OCI-LY7 (cell line): ENCODE measurements at regions of chr5 and their contacts with region 1.

Region 1: DNA sequence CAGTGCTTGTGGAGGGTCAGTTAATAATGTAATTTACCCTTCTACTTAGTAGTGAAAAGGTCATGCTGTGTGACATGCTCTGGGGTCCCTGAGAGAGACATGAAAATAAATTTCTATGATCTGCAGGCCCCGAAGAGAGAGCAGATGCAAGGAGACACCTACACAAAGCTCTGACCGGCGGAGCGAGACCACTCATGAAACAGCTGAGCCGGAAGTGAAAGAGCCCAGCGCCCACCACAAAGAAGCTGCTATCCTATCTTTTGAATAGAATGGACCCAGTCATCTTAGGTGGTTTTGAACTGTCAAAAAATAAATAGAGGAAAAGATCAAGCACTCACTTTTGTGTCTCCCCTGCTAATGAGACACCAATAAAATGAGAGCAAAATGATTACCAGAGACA is 190.0 kb downstream of the MED10 start:
- DNase-seq: peak; percentile 97
- H3K4me3 ChIP-seq: peak overlapping the region; percentile 56
- H3K27ac ChIP-seq: peak overlapping the region; percentile 98
- H3K4me1 ChIP-seq: peaks cover 71% of the 10 kb centered on the region
- CTCF ChIP-seq: no peak

Region 2: GRCh38 chr5:5421961-5422818 is 766.2 kb before region 1 on chr5 and contains the start of gene ICE1:
- CTCF ChIA-PET with region 1: no interaction called
- POLR2A ChIA-PET with region 1: no interaction called
- intact Hi-C with region 1: loop called (anchors 5 kb)
- DNase-seq: peak; percentile 97
- H3K4me3 ChIP-seq: peak within 1 kb of the TSS; percentile 99
- H3K27ac ChIP-seq: peak within 1 kb of the TSS; percentile 71
- H3K4me1 ChIP-seq: peaks cover 45% of the 10 kb centered on the region
- CTCF ChIP-seq: no peak
- total RNA-seq, gene ICE1: 24.4 and 25.2 TPM in 2 replicates

Region 3: DNA sequence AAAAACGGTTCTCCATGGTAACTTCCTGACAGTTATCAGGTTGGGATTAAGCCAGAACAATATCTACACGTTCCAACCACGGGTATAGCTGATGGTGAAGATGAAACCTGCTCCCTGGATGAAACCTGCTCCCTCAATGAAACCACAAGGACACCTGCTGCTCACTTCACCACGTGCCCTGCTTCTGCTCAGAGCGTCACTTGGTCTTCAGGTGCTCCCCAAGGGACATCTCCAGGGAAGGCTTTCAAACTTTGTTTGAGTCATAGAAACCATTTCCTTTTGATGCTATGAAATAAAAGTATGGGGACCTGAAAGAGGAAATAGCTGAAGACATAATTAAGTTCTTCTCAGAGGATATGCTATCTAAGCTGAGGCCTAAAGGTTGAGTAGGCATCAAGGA is 52.4 kb before region 1 on chr5:
- CTCF ChIA-PET with region 1: interaction called, 4 read pairs
- POLR2A ChIA-PET with region 1: interaction called, 3 read pairs
- intact Hi-C with region 1: loop called (anchors 1 kb)
- DNase-seq: peak; percentile 84
- H3K4me3 ChIP-seq: peak overlapping the region; percentile 30
- H3K27ac ChIP-seq: no peak overlapping the region
- H3K4me1 ChIP-seq: peaks cover 16% of the 10 kb centered on the region
- CTCF ChIP-seq: no peak

Region 4: DNA sequence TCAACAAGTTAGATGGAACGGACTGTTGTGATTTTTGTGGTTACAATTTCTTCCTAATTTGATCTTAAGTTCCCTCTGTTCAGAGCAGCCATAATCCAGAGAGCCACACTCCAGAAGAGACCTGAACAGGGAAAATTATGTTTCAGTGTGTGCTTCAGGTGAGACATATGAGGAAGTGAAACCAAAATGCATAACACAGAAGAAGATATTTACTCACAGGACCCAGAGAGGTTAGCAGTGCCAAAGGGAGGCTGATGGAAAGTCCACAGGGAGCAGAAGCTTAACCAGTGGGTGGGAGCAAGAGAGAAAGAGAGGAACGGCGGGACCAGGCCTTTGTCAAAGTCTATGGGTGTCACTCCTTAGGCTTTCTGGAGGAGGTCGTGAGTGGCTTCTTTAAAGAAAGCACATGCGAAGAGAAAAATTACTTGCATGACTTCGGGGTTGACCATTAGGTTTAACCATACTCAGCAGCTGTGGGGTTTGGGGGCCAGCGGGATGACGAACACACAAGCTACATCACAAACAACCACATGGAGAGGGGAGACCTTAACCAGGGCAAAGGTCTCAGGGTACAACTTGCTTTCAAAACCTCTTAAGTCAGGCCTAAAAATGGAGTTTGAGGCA is 48.6 kb after region 1 on chr5:
- CTCF ChIA-PET with region 1: no interaction called
- POLR2A ChIA-PET with region 1: no interaction called
- intact Hi-C with region 1: loop called (anchors 2 kb)
- DNase-seq: peak; percentile 66
- H3K4me3 ChIP-seq: no peak overlapping the region
- H3K27ac ChIP-seq: no peak overlapping the region
- H3K4me1 ChIP-seq: peaks cover 22% of the 10 kb centered on the region
- CTCF ChIP-seq: no peak

Region 5: GRCh38 chr5:6251565-6252102 is 63.3 kb after region 1 on chr5:
- CTCF ChIA-PET with region 1: no interaction called
- POLR2A ChIA-PET with region 1: no interaction called
- intact Hi-C with region 1: no loop called
- DNase-seq: no peak
- H3K4me3 ChIP-seq: no peak overlapping the region
- H3K27ac ChIP-seq: no peak overlapping the region
- H3K4me1 ChIP-seq: peaks cover 5% of the 10 kb centered on the region
- CTCF ChIP-seq: no peak

Region 6: GRCh38 chr5:6365142-6365976 is 177.0 kb after region 1 on chr5:
- CTCF ChIA-PET with region 1: no interaction called
- POLR2A ChIA-PET with region 1: no interaction called
- intact Hi-C with region 1: no loop called
- DNase-seq: no peak
- H3K4me3 ChIP-seq: no peak overlapping the region
- H3K27ac ChIP-seq: no peak overlapping the region
- H3K4me1 ChIP-seq: peaks cover 8% of the 10 kb centered on the region
- CTCF ChIP-seq: no peak

Region 7: DNA sequence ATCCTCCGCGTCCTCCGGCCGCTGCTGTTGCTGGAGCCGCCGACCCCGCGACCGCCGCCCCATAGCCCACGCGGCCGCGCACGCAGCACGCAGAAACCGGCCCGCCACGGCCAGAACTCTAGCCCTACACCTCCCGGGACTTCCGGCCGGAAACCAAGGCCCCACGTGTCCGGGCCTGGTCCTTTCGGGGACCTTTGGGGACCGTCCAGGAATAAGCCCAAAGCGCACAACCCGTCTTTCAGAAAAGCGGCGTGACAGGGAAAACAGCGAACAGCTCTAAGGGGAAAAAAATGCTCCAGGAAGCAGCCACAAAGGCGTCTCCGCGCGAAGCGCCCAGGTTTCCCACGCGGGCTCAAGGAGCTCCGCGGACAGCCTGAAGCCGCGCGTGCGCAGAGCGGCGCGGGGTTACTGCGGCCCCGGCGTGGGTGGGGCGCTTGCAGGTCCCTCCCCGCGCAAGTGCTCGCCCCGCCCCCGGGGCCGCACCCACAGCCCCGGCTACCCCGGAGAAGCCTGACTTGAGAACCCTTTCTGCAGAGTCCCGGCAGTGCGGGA is 444.6 kb after region 1 on chr5 and contains the starts of genes NSUN2 and SRD5A1:
- CTCF ChIA-PET with region 1: no interaction called
- POLR2A ChIA-PET with region 1: interaction called, 4 read pairs
- intact Hi-C with region 1: loop called (anchors 10 kb)
- DNase-seq: peak; percentile 94
- H3K4me3 ChIP-seq: peak within 1 kb of the TSS; percentile 97
- H3K27ac ChIP-seq: peak within 1 kb of the TSS; percentile 43
- H3K4me1 ChIP-seq: peaks cover 19% of the 10 kb centered on the region
- CTCF ChIP-seq: no peak
- total RNA-seq, gene NSUN2: 88.1 and 88.9 TPM in 2 replicates
- total RNA-seq, gene SRD5A1: 16.7 and 31.6 TPM in 2 replicates

Region 8: GRCh38 chr5:6728011-6728794 is 539.9 kb after region 1 on chr5:
- CTCF ChIA-PET with region 1: no interaction called
- POLR2A ChIA-PET with region 1: no interaction called
- intact Hi-C with region 1: loop called (anchors 10 kb)
- DNase-seq: peak; percentile 84
- H3K4me3 ChIP-seq: peak overlapping the region; percentile 55
- H3K27ac ChIP-seq: peak overlapping the region; percentile 86
- H3K4me1 ChIP-seq: peaks cover 54% of the 10 kb centered on the region
- CTCF ChIP-seq: peak; percentile 64